Activated CD4-positive, alpha-beta T cell treated with anti-CD3 and anti-CD28 coated beads for 36 hours (primary cell): ENCODE measurements at regions of chr2 and their contacts with region 1.

Region 1: GRCh38 chr2:74458132-74458925 is at the start of gene WBP1:
- DNase-seq: peak; percentile 99
- ATAC-seq: peak; percentile 88
- H3K4me3 Mint-ChIP-seq: peak within 1 kb of the TSS; percentile 90
- H3K27ac Mint-ChIP-seq: peak within 1 kb of the TSS; percentile 99
- H3K4me1 Mint-ChIP-seq: peaks cover 37% of the 10 kb centered on the region
- H3K27me3 Mint-ChIP-seq: no peaks in the 10 kb centered on the region
- total RNA-seq, gene WBP1: 24.9 to 30.2 TPM

Region 2: GRCh38 chr2:74119912-74120825 is 338.2 kb before region 1 on chr2:
- CTCF ChIA-PET with region 1: no interaction called
- POLR2A ChIA-PET with region 1: no interaction called
- intact Hi-C with region 1: loop called in 1 of 2 experiments (anchors 1 kb)
- DNase-seq: peak; percentile 92
- ATAC-seq: peak; percentile 97
- H3K4me3 Mint-ChIP-seq: peak overlapping the region; percentile 81
- H3K27ac Mint-ChIP-seq: peak overlapping the region; percentile 89
- H3K4me1 Mint-ChIP-seq: peaks cover 7% of the 10 kb centered on the region
- H3K27me3 Mint-ChIP-seq: peaks cover 3% of the 10 kb centered on the region

Region 3: GRCh38 chr2:74391580-74392448 is 66.5 kb before region 1 on chr2:
- CTCF ChIA-PET with region 1: interaction called, 9 read pairs
- POLR2A ChIA-PET with region 1: interaction called, 7 read pairs
- intact Hi-C with region 1: loop called (anchors 1 kb)
- DNase-seq: peak; percentile 98
- ATAC-seq: peak; percentile 78
- H3K4me3 Mint-ChIP-seq: peak overlapping the region; percentile 86
- H3K27ac Mint-ChIP-seq: peak overlapping the region; percentile 99
- H3K4me1 Mint-ChIP-seq: peaks cover 7% of the 10 kb centered on the region
- H3K27me3 Mint-ChIP-seq: no peaks in the 10 kb centered on the region

Region 4: DNA sequence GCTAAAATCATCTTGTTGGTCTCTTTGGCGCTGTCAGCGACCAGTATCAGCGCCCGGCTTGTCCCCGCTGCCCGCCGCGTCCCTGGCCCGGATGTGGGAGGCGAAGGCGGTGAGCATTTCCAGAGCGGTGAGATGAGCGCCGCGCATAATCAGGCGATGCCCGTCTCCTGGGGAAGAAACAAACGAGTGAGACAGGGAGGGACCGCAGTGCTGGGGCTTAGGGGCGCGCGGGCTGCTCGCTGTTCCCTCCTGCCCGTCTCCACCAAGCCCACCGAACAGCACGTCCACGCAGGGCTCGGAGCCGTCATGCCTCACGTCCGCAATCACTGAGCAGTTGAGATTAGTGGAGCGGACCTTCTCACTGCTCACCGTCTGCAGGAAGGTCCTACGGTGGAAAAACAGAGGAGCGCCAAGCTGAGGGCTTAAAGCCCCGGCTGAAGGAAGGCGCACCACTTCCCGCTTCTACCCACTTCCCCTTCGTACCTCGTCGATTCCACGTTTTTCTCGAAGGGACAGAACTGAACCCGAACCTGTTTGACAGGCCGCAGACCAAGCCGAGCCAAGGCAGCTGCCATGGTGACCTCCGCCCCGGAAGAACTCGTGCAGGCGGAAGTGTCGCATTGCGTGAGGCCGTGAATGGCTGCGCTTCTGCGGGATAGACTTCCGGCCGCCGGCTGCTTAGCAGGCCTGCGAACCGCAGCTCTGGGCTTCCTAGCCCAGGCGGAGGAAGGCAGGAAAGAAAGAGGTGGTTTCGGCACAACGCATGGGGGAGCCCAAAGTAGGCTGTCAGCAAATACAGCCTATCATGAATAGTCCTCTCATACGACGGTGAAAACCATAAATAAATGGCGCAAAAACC is 14.0 kb after region 1 on chr2 and contains the start of gene MRPL53:
- CTCF ChIA-PET with region 1: interaction called, 44 read pairs
- POLR2A ChIA-PET with region 1: interaction called, 9 read pairs
- intact Hi-C with region 1: loop called (anchors 1 kb)
- DNase-seq: peak; percentile 97
- ATAC-seq: peak; percentile 92
- H3K4me3 Mint-ChIP-seq: peak within 1 kb of the TSS; percentile 98
- H3K27ac Mint-ChIP-seq: peak within 1 kb of the TSS; percentile 93
- H3K4me1 Mint-ChIP-seq: peaks cover 21% of the 10 kb centered on the region
- H3K27me3 Mint-ChIP-seq: no peaks in the 10 kb centered on the region
- total RNA-seq, gene MRPL53: 87.4 to 88.5 TPM

Region 5: DNA sequence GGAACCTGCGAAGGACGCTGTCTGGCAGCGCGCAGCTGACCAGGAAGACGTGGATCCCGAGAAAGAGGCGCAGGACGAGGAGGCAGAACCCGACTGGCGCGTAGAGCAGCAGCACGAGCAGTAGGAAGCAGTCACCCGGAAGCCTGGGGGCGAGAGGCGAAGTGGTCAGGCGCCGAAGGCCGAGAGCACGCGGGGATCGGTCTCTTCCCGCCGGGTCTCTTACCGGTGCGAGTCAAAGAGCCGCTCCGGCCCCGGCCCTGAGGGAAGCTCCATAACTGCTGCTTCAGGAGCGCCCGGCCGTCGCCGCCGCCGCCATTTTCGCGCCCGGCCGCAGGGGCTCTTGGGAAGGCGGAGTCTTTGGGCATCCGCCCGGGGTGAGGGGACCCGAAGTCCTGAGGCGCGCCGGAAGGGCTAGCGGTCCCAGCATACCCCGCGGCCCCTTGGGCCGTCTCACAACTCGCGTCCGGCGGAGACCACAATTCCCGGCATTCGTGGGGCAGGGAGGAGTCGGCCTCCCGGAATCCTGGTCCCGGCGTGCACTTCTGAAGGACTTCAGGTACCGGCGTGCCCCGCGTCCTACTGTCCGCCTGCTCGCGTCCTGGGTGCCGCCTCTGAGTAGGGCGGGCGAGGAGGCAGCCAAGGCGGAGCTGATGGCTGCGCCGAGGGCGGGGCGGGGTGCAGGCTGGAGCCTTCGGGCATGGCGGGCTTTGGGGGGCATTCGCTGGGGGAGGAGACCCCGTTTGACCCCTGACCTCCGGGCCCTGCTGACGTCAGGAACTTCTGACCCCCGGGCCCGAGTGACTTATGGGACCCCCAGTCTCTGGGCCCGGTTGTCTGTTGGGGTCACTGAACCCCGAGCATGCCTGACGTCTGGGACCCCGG is 71.3 kb after region 1 on chr2 and contains the starts of genes AUP1 and HTRA2:
- CTCF ChIA-PET with region 1: interaction called, 8 read pairs
- POLR2A ChIA-PET with region 1: interaction called, 11 read pairs
- intact Hi-C with region 1: loop called (anchors 1 kb)
- DNase-seq: peak; percentile 97
- ATAC-seq: peak; percentile 90
- H3K4me3 Mint-ChIP-seq: peak within 1 kb of the TSS; percentile 100
- H3K27ac Mint-ChIP-seq: peak within 1 kb of the TSS; percentile 98
- H3K4me1 Mint-ChIP-seq: peaks cover 35% of the 10 kb centered on the region
- H3K27me3 Mint-ChIP-seq: no peaks in the 10 kb centered on the region
- total RNA-seq, gene AUP1: 92.0 to 122 TPM
- total RNA-seq, gene HTRA2: 43.5 to 47.7 TPM

Region 6: GRCh38 chr2:74653985-74654882 is 195.9 kb after region 1 on chr2 and contains the start of gene SEMA4F:
- CTCF ChIA-PET with region 1: no interaction called
- POLR2A ChIA-PET with region 1: no interaction called
- intact Hi-C with region 1: loop called in 1 of 2 experiments (anchors 1 kb)
- DNase-seq: peak; percentile 97
- ATAC-seq: peak; percentile 100
- H3K4me3 Mint-ChIP-seq: peak within 1 kb of the TSS; percentile 76
- H3K27ac Mint-ChIP-seq: peak within 1 kb of the TSS; percentile 49
- H3K4me1 Mint-ChIP-seq: peaks cover 13% of the 10 kb centered on the region
- H3K27me3 Mint-ChIP-seq: peaks cover 7% of the 10 kb centered on the region
- total RNA-seq, gene SEMA4F: 5.7 to 7.4 TPM